Tibial artery (tissue), 4 donors: ENCODE measurements at regions of chr20 and their contacts with region 1.

Region 1: DNA sequence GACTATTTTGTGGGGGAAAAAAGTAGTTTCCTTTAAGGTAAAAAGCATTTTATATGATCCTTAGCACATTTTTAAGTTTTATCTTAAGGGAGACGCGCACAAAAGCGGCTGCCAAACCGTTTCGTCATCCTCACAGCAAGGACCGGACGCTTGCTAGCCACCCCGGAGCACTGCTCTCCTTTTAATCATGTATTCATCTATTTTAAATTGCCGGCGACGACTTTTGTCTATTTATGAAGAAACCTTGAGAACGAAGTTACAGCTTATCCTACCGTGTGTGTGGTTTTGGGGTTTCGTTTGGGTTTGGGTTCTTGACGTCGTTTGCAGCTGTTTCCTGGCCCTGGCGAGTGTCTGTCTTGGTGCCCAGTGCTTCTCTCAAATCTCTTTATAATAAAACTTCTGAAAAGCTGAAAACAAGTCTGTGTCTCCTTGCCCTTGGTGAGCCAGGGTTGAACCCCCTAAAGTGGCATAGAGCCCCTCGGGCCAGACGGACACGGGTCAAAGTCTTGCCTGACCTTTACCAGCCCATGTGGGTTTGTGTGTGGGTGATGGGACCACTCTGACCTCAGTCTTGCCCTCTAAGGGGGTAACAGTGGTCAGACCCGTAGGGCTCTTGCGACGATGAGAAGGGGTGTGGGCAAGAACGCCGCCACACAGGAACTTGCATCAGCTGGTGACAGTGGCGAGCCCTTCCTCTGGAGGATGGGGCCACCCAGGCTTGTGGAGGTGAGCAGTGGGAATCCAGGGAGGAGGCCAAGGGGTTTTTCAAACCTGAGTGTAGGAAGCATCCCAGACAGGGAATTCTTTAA is 117.6 kb downstream of the JPH2 start:
- DNase-seq: peak in 1 of 2 donors; percentile 28
- H3K4me3 ChIP-seq: no peak overlapping the region
- H3K27ac ChIP-seq: no peak overlapping the region
- H3K4me1 ChIP-seq: peaks cover 0 to 1% (median 0%) of the 10 kb centered on the region in 4 donors
- H3K27me3 ChIP-seq: peaks cover 0 to 16% of the 10 kb centered on the region in 2 donors
- CTCF ChIP-seq: no peak

Region 2: DNA sequence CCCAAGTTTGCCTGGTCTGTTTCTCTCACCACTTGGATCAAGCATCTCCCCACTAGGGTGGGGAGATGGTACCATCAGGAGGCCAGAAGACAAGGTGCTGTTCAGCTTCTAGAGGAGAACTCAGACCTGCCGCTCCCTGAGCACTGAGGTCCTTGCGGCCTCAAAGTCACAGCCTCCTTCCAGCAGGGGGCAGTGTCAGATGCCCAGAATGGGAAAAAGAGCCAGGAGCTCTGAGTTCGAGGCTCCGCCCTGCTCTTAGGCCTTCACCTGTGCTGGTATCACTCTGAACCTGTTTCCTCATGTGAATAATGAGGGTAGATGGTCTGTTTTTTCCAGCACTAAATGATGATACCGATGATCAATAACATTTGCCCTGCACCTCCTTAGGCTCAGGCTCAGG is 86.0 kb before region 1 on chr20:
- intact Hi-C with region 1: loop called (anchors 10 kb)
- DNase-seq: no peak
- H3K4me3 ChIP-seq: no peak overlapping the region
- H3K27ac ChIP-seq: no peak overlapping the region
- H3K4me1 ChIP-seq: no peaks in the 10 kb centered on the region
- H3K27me3 ChIP-seq: no peaks in the 10 kb centered on the region
- CTCF ChIP-seq: peak in 1 of 2 experiments; percentile 28

Region 3: GRCh38 chr20:44153636-44154043 is 84.2 kb after region 1 on chr20:
- intact Hi-C with region 1: no loop called
- DNase-seq: peak in 1 of 2 donors; percentile 78
- H3K4me3 ChIP-seq: no peak overlapping the region
- H3K27ac ChIP-seq: peak overlapping the region; percentile 90 to 92
- H3K4me1 ChIP-seq: peaks cover 0 to 94% (median 52%) of the 10 kb centered on the region in 4 donors
- H3K27me3 ChIP-seq: no peaks in the 10 kb centered on the region
- CTCF ChIP-seq: peak in 1 of 2 experiments; percentile 28

Region 4: DNA sequence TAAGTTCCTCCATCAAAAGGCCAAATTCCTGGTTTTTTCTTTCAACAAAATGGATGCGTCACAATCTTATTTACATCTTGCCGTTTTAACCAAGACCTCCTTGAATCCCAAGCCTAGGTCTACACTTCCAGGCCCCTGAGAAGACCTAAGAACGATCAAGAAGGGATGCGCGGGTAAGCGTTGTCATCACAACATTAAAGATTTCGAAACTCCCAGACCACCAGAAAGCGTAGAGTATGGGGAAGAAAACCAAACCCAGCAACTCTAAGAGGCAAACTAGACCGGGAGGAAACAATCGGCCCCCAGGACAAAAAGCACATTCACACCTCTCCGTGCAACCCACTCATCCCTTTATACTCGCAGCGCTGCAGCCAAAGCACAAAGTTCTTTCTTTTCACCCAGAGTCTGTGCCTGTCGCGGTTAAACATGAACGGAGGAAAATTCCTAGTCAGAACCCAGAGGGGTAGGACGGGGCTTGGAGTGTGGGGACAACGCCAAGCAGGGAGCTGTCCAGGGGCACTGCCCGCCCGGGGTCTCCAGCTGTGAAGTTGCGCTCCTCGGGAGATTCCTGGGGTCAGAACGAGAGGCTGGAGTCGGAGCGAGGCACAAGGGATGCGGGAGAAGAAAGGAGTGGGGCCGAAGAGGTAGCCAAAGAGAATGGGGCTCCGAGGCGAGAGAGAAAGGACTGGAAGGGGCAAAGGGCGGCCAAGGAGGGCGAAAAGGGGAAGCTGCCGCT is 140.4 kb after region 1 on chr20:
- intact Hi-C with region 1: no loop called
- DNase-seq: no peak
- H3K4me3 ChIP-seq: peak overlapping the region; percentile 78 to 98
- H3K27ac ChIP-seq: peak overlapping the region; percentile 96 to 99
- H3K4me1 ChIP-seq: peaks cover 0 to 58% (median 31%) of the 10 kb centered on the region in 4 donors
- H3K27me3 ChIP-seq: no peaks in the 10 kb centered on the region
- CTCF ChIP-seq: no peak